Left cardiac atrium (tissue), 4 donors: ENCODE measurements at regions of chr7 and their contacts with region 1.

Region 1: GRCh38 chr7:32846701-32847100 is 44.9 kb downstream of the KBTBD2 start:
- DNase-seq: peak; percentile 89
- ATAC-seq: peak; percentile 99 to 100

Region 2: GRCh38 chr7:32694182-32694581 is 152.5 kb before region 1 on chr7:
- intact Hi-C with region 1: no loop called
- DNase-seq: no peak
- ATAC-seq: no peak

Region 3: GRCh38 chr7:32891800-32892520 is 45.3 kb after region 1 on chr7:
- intact Hi-C with region 1: loop called in 1 of 2 experiments (anchors 10 kb)
- DNase-seq: peak; percentile 99
- ATAC-seq: peak; percentile 87 to 89

Region 4: GRCh38 chr7:32914184-32914583 is 67.5 kb after region 1 on chr7:
- intact Hi-C with region 1: loop called in 1 of 2 experiments (anchors 2 kb)
- DNase-seq: no peak
- ATAC-seq: no peak